BJ (cell line): ENCODE measurements at regions of chr3 and their contacts with region 1.

Region 1: GRCh38 chr3:57298041-57298440 is 5.6 kb upstream of the ASB14 start:
- DNase-seq: no peak
- H3K4me3 ChIP-seq: no peak overlapping the region
- H3K27me3 ChIP-seq: no peaks in the 10 kb centered on the region
- CTCF ChIP-seq: no peak

Region 2: DNA sequence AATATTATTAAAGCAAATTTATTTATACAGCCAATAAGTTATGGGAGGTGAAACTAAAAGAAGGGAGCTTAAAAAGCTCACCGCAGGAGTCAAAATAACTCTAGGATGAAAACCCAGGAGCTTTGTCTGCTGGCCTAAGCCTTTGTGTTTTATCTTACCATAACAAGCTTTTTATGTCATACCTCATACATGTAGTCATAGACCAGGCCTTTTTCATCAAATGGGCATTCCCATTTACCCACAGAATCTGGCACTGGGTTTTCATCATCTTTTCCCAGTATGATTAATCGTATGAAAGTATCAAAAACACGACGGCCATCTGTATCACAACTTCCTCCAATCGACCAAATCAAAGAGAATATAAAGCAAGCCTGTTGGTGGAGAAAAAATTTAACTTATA is 123.3 kb after region 1 on chr3:
- CTCF ChIA-PET with region 1: no interaction called
- POLR2A ChIA-PET with region 1: interaction called, 12 read pairs
- DNase-seq: no peak
- H3K4me3 ChIP-seq: no peak overlapping the region
- H3K27me3 ChIP-seq: peaks cover 2% of the 10 kb centered on the region; the same call in 1 of the 2 replicates
- CTCF ChIP-seq: no peak